Ascending aorta (tissue), 2 donors: ENCODE measurements at regions of chr3 and their contacts with region 1.

Region 1: GRCh38 chr3:69120879-69121464 is 1.4 kb downstream of the LMOD3 start:
- DNase-seq: peak in 1 of 2 donors; percentile 82
- H3K4me3 ChIP-seq: no peak overlapping the region
- H3K27ac ChIP-seq: no peak overlapping the region
- H3K4me1 ChIP-seq: no peaks in the 10 kb centered on the region
- H3K27me3 ChIP-seq: no peaks in the 10 kb centered on the region
- CTCF ChIP-seq: peak; percentile 69 to 90 (median 88)

Region 2: GRCh38 chr3:69671082-69671952 is 550.3 kb after region 1 on chr3:
- intact Hi-C with region 1: loop called (anchors 2 kb)
- DNase-seq: no peak
- H3K4me3 ChIP-seq: no peak overlapping the region
- H3K27ac ChIP-seq: no peak overlapping the region
- H3K4me1 ChIP-seq: no peaks in the 10 kb centered on the region
- H3K27me3 ChIP-seq: no peaks in the 10 kb centered on the region
- CTCF ChIP-seq: peak; percentile 67 to 74 (median 70)